GM12878 (cell line): ENCODE measurements at regions of chr9 and their contacts with region 1.

Region 1: GRCh38 chr9:115008536-115009270 is 78.3 kb upstream of the TNFSF8 start:
- DNase-seq: no peak
- ATAC-seq: peak; percentile 56
- H3K4me3 ChIP-seq: no peak overlapping the region
- H3K27ac ChIP-seq: no peak overlapping the region
- H3K4me1 ChIP-seq: no peaks in the 10 kb centered on the region
- H3K27me3 ChIP-seq: peaks cover 0 to 5% of the 10 kb centered on the region in 2 experiments; a peak in 2 of 4 replicates
- CTCF ChIP-seq: no peak
- EP300 ChIP-seq: no peak
- POLR2A ChIP-seq: no peak
- RAD21 ChIP-seq: no peak

Region 2: GRCh38 chr9:114738581-114739316 is 270.0 kb before region 1 on chr9:
- CTCF ChIA-PET with region 1: interaction called, 13 read pairs
- POLR2A ChIA-PET with region 1: no interaction called
- RAD21 ChIA-PET with region 1: interaction called, 8 read pairs
- SMC1A ChIA-PET with region 1: interaction called, 35 read pairs
- in situ Hi-C with region 1: loop called (anchors 5 kb)
- intact Hi-C with region 1: no loop called
- DNase-seq: peak; percentile 24
- ATAC-seq: peak; percentile 95
- H3K4me3 ChIP-seq: no peak overlapping the region
- H3K27ac ChIP-seq: no peak overlapping the region
- H3K4me1 ChIP-seq: no peaks in the 10 kb centered on the region
- H3K27me3 ChIP-seq: peaks cover 1 to 3% of the 10 kb centered on the region in 2 experiments; a peak in 2 of 4 replicates
- CTCF ChIP-seq: peak; percentile 76 to 88 (median 82)
- EP300 ChIP-seq: no peak
- POLR2A ChIP-seq: no peak
- RAD21 ChIP-seq: peak; percentile 98

Region 3: GRCh38 chr9:114914139-114914538 is 94.6 kb before region 1 on chr9:
- CTCF ChIA-PET with region 1: interaction called, 21 read pairs
- POLR2A ChIA-PET with region 1: no interaction called
- RAD21 ChIA-PET with region 1: interaction called, 7 read pairs
- SMC1A ChIA-PET with region 1: interaction called, 10 read pairs
- in situ Hi-C with region 1: loop called (anchors 5 kb)
- intact Hi-C with region 1: no loop called
- DNase-seq: no peak
- ATAC-seq: peak; percentile 57; the same call in 2 of the 3 replicates
- H3K4me3 ChIP-seq: no peak overlapping the region
- H3K27ac ChIP-seq: no peak overlapping the region
- H3K4me1 ChIP-seq: peaks cover 7% of the 10 kb centered on the region; the same call in 1 of the 2 replicates
- H3K27me3 ChIP-seq: 0 out of 4 replicates have a peak, but pooled peaks cover 1 to 4% of the 10 kb centered on the region in 2 experiments
- CTCF ChIP-seq: peak; percentile 13 to 33 (median 18); a peak in 1 of 6 replicates
- EP300 ChIP-seq: no peak
- POLR2A ChIP-seq: no peak
- RAD21 ChIP-seq: peak; percentile 19; the same call in 1 of the 2 replicates

Region 4: GRCh38 chr9:114953046-114953445 is 55.7 kb before region 1 on chr9:
- CTCF ChIA-PET with region 1: interaction called, 17 read pairs
- POLR2A ChIA-PET with region 1: no interaction called
- RAD21 ChIA-PET with region 1: no interaction called
- SMC1A ChIA-PET with region 1: no interaction called
- in situ Hi-C with region 1: no loop called
- intact Hi-C with region 1: loop called (anchors 5 kb)
- DNase-seq: no peak
- ATAC-seq: no peak
- H3K4me3 ChIP-seq: no peak overlapping the region
- H3K27ac ChIP-seq: no peak overlapping the region
- H3K4me1 ChIP-seq: no peaks in the 10 kb centered on the region
- H3K27me3 ChIP-seq: no peaks in the 10 kb centered on the region; a peak in 1 of 4 replicates
- CTCF ChIP-seq: no peak
- EP300 ChIP-seq: no peak
- POLR2A ChIP-seq: no peak
- RAD21 ChIP-seq: no peak

Region 5: GRCh38 chr9:114988962-114989599 is 19.6 kb before region 1 on chr9:
- CTCF ChIA-PET with region 1: interaction called, 3 read pairs
- POLR2A ChIA-PET with region 1: interaction called, 11 read pairs
- RAD21 ChIA-PET with region 1: interaction called, 12 read pairs
- SMC1A ChIA-PET with region 1: interaction called, 49 read pairs
- in situ Hi-C with region 1: no loop called
- intact Hi-C with region 1: no loop called
- DNase-seq: peak; percentile 26
- ATAC-seq: peak; percentile 82
- H3K4me3 ChIP-seq: no peak overlapping the region
- H3K27ac ChIP-seq: no peak overlapping the region
- H3K4me1 ChIP-seq: 0 out of 2 replicates have a peak, but pooled peaks cover 3% of the 10 kb centered on the region
- H3K27me3 ChIP-seq: no peaks in the 10 kb centered on the region; a peak in 1 of 4 replicates
- CTCF ChIP-seq: no peak
- EP300 ChIP-seq: no peak
- POLR2A ChIP-seq: no peak
- RAD21 ChIP-seq: no peak